Breast epithelium (tissue), 4 donors: ENCODE measurements at regions of chr11 and their contacts with region 1.

Region 1: GRCh38 chr11:101346591-101346990 is 217.0 kb upstream of the PGR start:
- DNase-seq: peak in 1 of 2 donors; percentile 34
- H3K4me3 ChIP-seq: no peak overlapping the region
- H3K27ac ChIP-seq: peak overlapping the region; percentile 77 to 90
- H3K4me1 ChIP-seq: peaks cover 0 to 3% of the 10 kb centered on the region in 2 donors
- H3K27me3 ChIP-seq: no peaks in the 10 kb centered on the region
- CTCF ChIP-seq: no peak
- POLR2A ChIP-seq: no peak

Region 2: DNA sequence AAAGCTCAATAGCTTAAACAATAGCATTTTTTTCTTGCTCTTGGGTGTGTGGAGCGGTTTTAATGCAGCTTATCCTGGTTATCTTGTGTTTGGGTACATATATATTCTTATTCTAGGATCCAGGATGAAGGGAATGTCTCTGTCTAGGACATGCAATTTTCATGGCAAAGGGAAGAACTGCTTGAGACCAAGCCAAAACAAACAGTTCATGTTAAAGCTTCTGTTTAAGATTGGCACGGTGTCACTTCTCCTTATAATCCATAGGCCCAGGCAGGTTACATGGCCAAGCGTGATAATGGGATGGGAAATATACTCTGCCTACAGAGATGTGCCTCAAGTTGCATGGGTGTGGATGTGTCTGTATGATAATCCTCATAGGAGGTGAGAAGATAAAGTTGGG is 39.9 kb before region 1 on chr11:
- intact Hi-C with region 1: loop called (anchors 2 kb)
- DNase-seq: no peak
- H3K4me3 ChIP-seq: no peak overlapping the region
- H3K27ac ChIP-seq: no peak overlapping the region
- H3K4me1 ChIP-seq: no peaks in the 10 kb centered on the region
- H3K27me3 ChIP-seq: no peaks in the 10 kb centered on the region
- CTCF ChIP-seq: no peak
- POLR2A ChIP-seq: no peak

Region 3: GRCh38 chr11:101363706-101364275 is 17.2 kb after region 1 on chr11:
- intact Hi-C with region 1: no loop called
- DNase-seq: no peak
- H3K4me3 ChIP-seq: no peak overlapping the region
- H3K27ac ChIP-seq: no peak overlapping the region
- H3K4me1 ChIP-seq: no peaks in the 10 kb centered on the region
- H3K27me3 ChIP-seq: no peaks in the 10 kb centered on the region
- CTCF ChIP-seq: no peak
- POLR2A ChIP-seq: no peak

Region 4: DNA sequence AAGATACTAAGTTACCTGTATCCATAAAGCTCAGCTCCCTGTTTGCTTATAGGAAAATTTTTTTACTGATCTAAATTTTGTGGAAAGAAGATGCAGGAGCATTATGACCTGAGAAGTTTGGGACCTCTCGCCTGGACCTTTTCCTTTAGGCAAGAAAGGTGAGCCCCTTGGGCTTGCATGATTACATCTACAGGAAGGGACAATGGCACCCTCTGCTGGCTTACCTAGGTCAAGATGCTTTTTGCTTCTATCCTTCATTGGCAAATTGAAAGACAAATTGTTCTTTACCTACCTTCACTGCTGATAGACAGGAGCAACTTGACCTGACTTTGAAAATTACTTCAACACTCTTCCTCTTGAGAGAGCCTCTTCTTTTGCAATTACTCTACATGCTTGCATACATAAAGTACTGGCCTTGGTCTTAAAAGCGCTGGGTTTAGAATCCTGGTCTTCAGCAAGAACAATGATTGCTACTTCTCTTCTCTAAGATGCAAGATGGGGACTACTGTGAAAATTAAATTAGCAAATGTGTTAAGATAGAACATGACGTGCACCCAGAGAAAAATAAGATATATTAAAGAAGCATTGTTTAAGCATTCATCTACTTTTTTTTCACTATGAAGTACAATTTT is 90.0 kb after region 1 on chr11:
- intact Hi-C with region 1: no loop called
- DNase-seq: no peak
- H3K4me3 ChIP-seq: no peak overlapping the region
- H3K27ac ChIP-seq: no peak overlapping the region
- H3K4me1 ChIP-seq: peaks cover 0 to 3% of the 10 kb centered on the region in 2 donors
- H3K27me3 ChIP-seq: no peaks in the 10 kb centered on the region
- CTCF ChIP-seq: peak in 2 of 3 donors; percentile 65 to 66
- POLR2A ChIP-seq: no peak

Region 5: DNA sequence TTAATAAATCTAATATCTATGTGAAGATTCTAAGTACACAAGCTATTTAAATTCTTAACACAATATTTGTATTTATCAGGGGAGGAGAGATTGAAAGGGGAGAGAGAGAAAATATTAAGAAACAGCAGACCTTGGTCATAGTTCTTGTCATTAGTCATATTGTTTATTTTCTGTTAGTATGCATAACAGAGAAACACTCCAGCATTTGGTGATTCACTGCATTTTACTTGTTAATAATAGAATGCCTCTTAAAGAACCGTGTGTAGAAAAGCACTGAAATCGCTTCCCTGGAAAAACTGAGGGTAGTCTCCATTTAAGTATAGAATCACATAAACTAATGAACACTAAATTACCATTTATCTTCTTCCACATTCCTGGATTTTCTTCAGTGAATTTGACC is 359.9 kb after region 1 on chr11:
- intact Hi-C with region 1: no loop called
- DNase-seq: no peak
- H3K4me3 ChIP-seq: no peak overlapping the region
- H3K27ac ChIP-seq: no peak overlapping the region
- H3K4me1 ChIP-seq: no peaks in the 10 kb centered on the region
- H3K27me3 ChIP-seq: no peaks in the 10 kb centered on the region
- CTCF ChIP-seq: no peak
- POLR2A ChIP-seq: no peak